HEK293 (cell line): ENCODE measurements at regions of chr12 and their contacts with region 1.

Region 1: GRCh38 chr12:52582971-52583456 is 9.4 kb upstream of the KRT74 start:
- H3K4me3 ChIP-seq: no peak overlapping the region
- H3K27ac ChIP-seq: no peak overlapping the region
- H3K4me1 ChIP-seq: no peaks in the 10 kb centered on the region
- CTCF ChIP-seq: peak; percentile 68

Region 2: GRCh38 chr12:52865090-52865944 is 282.3 kb after region 1 on chr12:
- CTCF ChIA-PET with region 1: interaction called, 32 read pairs
- POLR2A ChIA-PET with region 1: no interaction called
- H3K4me3 ChIP-seq: no peak overlapping the region
- H3K27ac ChIP-seq: no peak overlapping the region
- H3K4me1 ChIP-seq: no peaks in the 10 kb centered on the region; the same call in 1 of the 2 replicates
- CTCF ChIP-seq: peak; percentile 68; the same call in 1 of the 2 replicates

Region 3: GRCh38 chr12:52870351-52871290 is 287.6 kb after region 1 on chr12:
- CTCF ChIA-PET with region 1: interaction called, 32 read pairs
- POLR2A ChIA-PET with region 1: no interaction called
- H3K4me3 ChIP-seq: no peak overlapping the region
- H3K27ac ChIP-seq: no peak overlapping the region
- H3K4me1 ChIP-seq: peaks cover 13% of the 10 kb centered on the region; the same call in 1 of the 2 replicates
- CTCF ChIP-seq: peak; percentile 84